Heart left ventricle (tissue), 16 donors: ENCODE measurements at regions of chr14 and their contacts with region 1.

Region 1: DNA sequence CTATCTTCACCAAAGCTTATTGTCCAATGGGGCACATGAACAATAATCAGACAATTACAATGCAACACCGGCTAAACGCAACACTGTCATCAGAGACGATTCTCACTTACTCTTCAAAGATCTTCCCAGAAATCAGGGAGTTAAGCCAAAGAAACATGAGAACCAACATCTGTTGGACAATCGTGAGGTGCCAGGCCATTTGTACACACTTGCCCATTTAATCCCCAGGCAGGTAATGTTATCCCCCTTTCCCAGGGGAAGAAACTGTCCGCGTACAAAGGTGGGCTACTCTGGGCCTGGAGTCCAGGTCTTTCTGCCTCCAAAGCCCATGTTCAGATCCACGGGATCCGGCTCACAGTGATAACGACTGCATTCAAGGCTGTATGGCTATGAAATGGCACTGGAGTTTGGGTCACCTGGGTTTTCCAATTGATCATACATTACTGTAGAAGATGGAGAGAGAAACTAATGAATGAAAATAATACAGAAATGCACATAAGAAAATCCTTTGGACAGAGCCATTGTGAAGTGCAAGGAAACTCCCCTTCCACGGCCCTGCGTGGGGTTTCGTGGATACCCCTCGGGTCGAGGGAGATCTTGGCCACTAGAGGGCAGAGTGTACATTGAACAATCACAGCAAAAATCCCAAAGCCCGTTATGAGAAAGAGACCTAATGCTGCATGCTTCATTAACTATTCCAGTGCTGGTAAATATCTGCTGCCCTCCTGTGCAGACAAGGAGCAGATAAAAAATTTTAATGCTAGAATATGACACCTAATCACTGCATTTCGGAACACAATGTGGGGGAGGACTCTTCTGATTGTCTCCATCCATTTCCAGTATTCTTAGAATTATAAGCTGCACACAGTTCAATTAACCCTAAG is 111.4 kb downstream of the EGLN3 start:
- DNase-seq: peak in 4 of 5 donors; percentile 37 to 53 (median 47)
- ATAC-seq: peak; percentile 65 to 81 (median 74)
- H3K4me3 ChIP-seq: no peak overlapping the region
- H3K27ac ChIP-seq: no peak overlapping the region
- H3K4me1 ChIP-seq: peaks cover 0 to 19% (median 2%) of the 10 kb centered on the region in 12 donors
- H3K27me3 ChIP-seq: no peaks in the 10 kb centered on the region
- CTCF ChIP-seq: peak; percentile 77 to 95 (median 86)
- POLR2A ChIP-seq: no peak

Region 2: GRCh38 chr14:34030864-34031263 is 191.4 kb after region 1 on chr14:
- intact Hi-C with region 1: loop called in 1 of 10 experiments (anchors 10 kb)
- DNase-seq: peak in 4 of 5 donors; percentile 57 to 68 (median 63)
- ATAC-seq: peak; percentile 28 to 71 (median 54)
- H3K4me3 ChIP-seq: no peak overlapping the region
- H3K27ac ChIP-seq: peak overlapping the region in 11 of 12 donors; percentile 18 to 76 (median 63)
- H3K4me1 ChIP-seq: peaks cover 0 to 40% (median 23%) of the 10 kb centered on the region in 12 donors
- H3K27me3 ChIP-seq: no peaks in the 10 kb centered on the region
- CTCF ChIP-seq: no peak
- POLR2A ChIP-seq: no peak

Region 3: GRCh38 chr14:34051966-34052657 is 212.7 kb after region 1 on chr14:
- intact Hi-C with region 1: loop called in 1 of 10 experiments (anchors 5 kb)
- DNase-seq: no peak
- ATAC-seq: peak in 3 of 4 donors; percentile 41 to 63 (median 61)
- H3K4me3 ChIP-seq: no peak overlapping the region
- H3K27ac ChIP-seq: peak overlapping the region in 2 of 12 donors; percentile 18 to 54
- H3K4me1 ChIP-seq: peaks cover 0 to 42% (median 16%) of the 10 kb centered on the region in 12 donors
- H3K27me3 ChIP-seq: no peaks in the 10 kb centered on the region
- CTCF ChIP-seq: no peak
- POLR2A ChIP-seq: no peak

Region 4: GRCh38 chr14:34300882-34301734 is 461.7 kb after region 1 on chr14:
- intact Hi-C with region 1: loop called in 9 of 10 experiments (anchors 1 to 5 kb)
- DNase-seq: no peak
- ATAC-seq: peak in 3 of 4 donors; percentile 38 to 70 (median 45)
- H3K4me3 ChIP-seq: no peak overlapping the region
- H3K27ac ChIP-seq: no peak overlapping the region
- H3K4me1 ChIP-seq: no peaks in the 10 kb centered on the region
- H3K27me3 ChIP-seq: no peaks in the 10 kb centered on the region
- CTCF ChIP-seq: peak; percentile 46 to 74 (median 62)
- POLR2A ChIP-seq: no peak

Region 5: DNA sequence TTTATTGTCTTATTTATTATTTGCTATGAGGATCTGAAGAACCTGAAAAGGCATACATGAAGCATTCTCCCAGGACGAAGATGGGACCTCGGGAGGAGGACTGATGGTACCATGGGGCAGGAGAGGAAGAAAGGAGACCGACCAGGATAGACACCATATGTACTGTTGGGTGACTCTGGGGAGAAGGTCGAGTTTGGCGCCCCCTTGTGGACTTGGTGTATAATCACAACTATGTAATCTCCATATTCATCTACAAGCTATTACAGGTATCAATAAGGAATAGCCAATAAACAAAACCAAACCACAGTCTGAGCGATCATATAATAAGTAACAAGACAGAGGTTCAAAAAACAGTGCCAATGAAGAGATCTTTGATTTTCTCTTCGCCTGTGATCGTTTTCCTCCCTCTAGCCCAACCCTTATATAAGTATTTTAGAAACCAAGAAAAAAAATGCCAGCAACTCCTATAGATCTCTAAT is 483.5 kb after region 1 on chr14:
- intact Hi-C with region 1: loop called in 1 of 10 experiments (anchors 1 kb)
- DNase-seq: peak; percentile 33 to 69 (median 49)
- ATAC-seq: peak in 3 of 4 donors; percentile 68 to 73 (median 72)
- H3K4me3 ChIP-seq: no peak overlapping the region
- H3K27ac ChIP-seq: no peak overlapping the region
- H3K4me1 ChIP-seq: peaks cover 0 to 3% (median 0%) of the 10 kb centered on the region in 12 donors
- H3K27me3 ChIP-seq: no peaks in the 10 kb centered on the region
- CTCF ChIP-seq: peak; percentile 54 to 80 (median 72)
- POLR2A ChIP-seq: no peak